ENCODE measurements at regions of chr1 and their contacts with region 1.

Region 1: GRCh38 chr1:206635080-206635977 is at the start of gene DYRK3:
- DNase-seq: peak; percentile 97
- ATAC-seq: peak; percentile 85
- H3K4me3 Mint-ChIP-seq: peak within 1 kb of the TSS; percentile 76
- H3K27ac Mint-ChIP-seq: peak within 1 kb of the TSS; percentile 74
- H3K4me1 Mint-ChIP-seq: peaks cover 34% of the 10 kb centered on the region
- H3K27me3 Mint-ChIP-seq: no peaks in the 10 kb centered on the region; the same call in 1 of the 2 replicates
- CTCF ChIP-seq: no peak
- total RNA-seq, gene DYRK3: 6.7 to 7.8 TPM (median 6.7 TPM) in 3 replicates

Region 2: DNA sequence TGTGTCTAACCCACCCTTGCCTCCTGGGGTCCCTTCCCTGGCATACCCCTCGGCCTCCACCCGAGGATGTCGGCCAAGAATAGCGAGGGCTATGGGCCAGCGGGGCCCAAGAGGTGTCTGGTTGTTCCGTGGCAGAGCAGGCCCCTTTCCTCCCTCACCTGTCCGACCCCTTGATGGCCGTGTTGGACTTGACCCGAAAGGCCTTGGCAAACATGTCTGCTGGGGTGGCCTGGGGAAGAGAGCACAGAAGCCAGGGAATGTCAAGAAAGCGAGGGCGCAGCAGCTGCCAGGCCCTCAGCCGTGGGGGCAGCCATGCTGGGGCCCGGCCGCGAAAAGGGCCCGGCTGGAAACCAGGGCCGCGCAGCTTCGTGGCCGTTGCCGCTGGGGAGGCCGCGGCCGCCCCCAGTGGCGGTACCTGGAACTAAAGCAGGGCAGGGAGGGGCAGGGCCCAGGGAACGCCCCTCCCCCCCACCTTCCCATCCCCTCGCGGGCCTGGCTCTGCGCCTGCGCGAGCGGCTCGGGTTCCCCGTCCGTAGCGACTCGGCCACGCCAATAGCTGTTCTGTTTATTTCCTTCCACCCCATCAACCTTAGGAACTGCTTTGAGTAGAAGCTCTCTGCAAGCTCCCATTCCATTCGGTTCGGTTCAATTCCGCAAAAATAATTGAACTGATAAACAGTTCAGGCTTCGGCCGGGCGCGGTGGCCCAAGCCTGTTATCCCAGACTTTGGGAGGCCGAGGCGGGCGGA is 23.0 kb before region 1 on chr1 and contains the start of gene EIF2D:
- CTCF ChIA-PET with region 1: interaction called, 62 read pairs
- POLR2A ChIA-PET with region 1: interaction called, 9 read pairs
- DNase-seq: peak; percentile 95
- ATAC-seq: peak; percentile 98
- H3K4me3 Mint-ChIP-seq: peak within 1 kb of the TSS; percentile 94
- H3K27ac Mint-ChIP-seq: peak within 1 kb of the TSS; percentile 97
- H3K4me1 Mint-ChIP-seq: peaks cover 12% of the 10 kb centered on the region
- H3K27me3 Mint-ChIP-seq: peaks cover 7% of the 10 kb centered on the region
- CTCF ChIP-seq: peak; percentile 88
- total RNA-seq, gene EIF2D: 35.7 to 36.8 TPM (median 35.9 TPM) in 3 replicates

Region 3: DNA sequence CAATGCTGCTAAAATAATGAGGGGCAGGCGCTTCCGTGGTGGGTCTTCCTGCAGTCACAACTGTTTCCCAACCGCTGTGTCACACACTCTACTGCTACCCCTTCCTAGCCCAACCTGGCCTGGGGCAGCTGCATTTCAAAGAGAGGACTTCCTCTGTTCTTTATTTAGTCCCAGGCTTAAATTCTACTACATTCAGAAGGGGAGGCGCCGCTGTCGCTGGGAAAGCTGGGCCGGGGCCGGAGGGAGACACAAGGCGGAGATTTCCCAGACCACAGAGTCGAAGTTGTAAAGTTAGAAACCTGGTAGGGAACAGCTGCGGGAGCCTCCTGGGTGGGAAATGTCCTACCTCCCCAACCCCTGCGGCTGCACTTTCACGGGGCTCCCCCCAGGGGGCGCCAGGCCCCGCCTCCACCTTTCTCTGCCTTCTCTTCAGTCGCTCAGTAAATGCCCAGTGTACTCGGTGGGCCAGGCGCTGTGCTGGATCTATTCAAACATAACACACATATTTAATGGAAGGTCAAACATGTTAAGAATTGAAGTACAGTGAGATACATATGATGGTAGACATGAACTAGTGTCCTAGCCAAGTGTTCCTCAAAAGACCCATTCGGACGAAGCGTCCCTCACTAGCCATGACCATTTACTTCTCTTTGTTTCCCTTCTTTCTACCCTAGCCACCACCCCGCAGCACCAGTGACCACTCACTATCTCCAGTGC is 23.1 kb after region 1 on chr1:
- CTCF ChIA-PET with region 1: interaction called, 659 read pairs
- POLR2A ChIA-PET with region 1: interaction called, 15 read pairs
- DNase-seq: peak; percentile 79
- ATAC-seq: peak; percentile 91
- H3K4me3 Mint-ChIP-seq: peak overlapping the region; percentile 58
- H3K27ac Mint-ChIP-seq: no peak overlapping the region
- H3K4me1 Mint-ChIP-seq: peaks cover 20% of the 10 kb centered on the region
- H3K27me3 Mint-ChIP-seq: peaks cover 43% of the 10 kb centered on the region
- CTCF ChIP-seq: peak; percentile 97

Region 4: GRCh38 chr1:206684478-206685333 is 49.4 kb after region 1 on chr1 and contains the start of gene MAPKAPK2:
- CTCF ChIA-PET with region 1: interaction called, 14 read pairs
- POLR2A ChIA-PET with region 1: interaction called, 3 read pairs
- DNase-seq: peak; percentile 68
- ATAC-seq: peak; percentile 45
- H3K4me3 Mint-ChIP-seq: peak within 1 kb of the TSS; percentile 86
- H3K27ac Mint-ChIP-seq: peak within 1 kb of the TSS; percentile 60; the same call in 1 of the 2 replicates
- H3K4me1 Mint-ChIP-seq: peaks cover 43% of the 10 kb centered on the region
- H3K27me3 Mint-ChIP-seq: peaks cover 59% of the 10 kb centered on the region
- CTCF ChIP-seq: no peak
- total RNA-seq, gene MAPKAPK2: 46.4 to 54.9 TPM (median 48.9 TPM) in 3 replicates

Region 5: GRCh38 chr1:206725109-206725963 is 90.0 kb after region 1 on chr1:
- CTCF ChIA-PET with region 1: interaction called, 11 read pairs
- POLR2A ChIA-PET with region 1: no interaction called
- DNase-seq: peak; percentile 67
- ATAC-seq: peak; percentile 26
- H3K4me3 Mint-ChIP-seq: no peak overlapping the region
- H3K27ac Mint-ChIP-seq: no peak overlapping the region; the same call in 1 of the 2 replicates
- H3K4me1 Mint-ChIP-seq: peaks cover 26% of the 10 kb centered on the region
- H3K27me3 Mint-ChIP-seq: no peaks in the 10 kb centered on the region
- CTCF ChIP-seq: peak; percentile 46; the same call in 1 of the 2 replicates

Region 6: DNA sequence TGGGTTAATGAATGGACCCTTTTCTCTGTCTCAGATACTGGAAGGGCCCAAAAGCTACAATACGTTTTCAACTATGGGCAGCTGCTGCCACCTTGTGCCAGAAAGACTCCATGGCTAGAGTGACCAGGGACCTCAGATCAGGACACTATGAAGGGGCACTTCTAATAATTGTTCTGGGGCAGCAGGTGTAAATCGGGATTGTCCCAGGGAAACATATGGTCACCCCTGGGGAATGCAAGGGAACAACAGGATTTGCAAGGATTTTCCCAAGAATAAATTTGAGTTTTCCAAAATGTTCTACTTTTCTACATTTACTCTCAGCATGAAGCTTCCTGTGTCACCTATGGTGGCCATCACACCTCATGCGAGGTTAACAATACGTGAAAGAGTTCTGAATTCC is 346.9 kb after region 1 on chr1:
- CTCF ChIA-PET with region 1: interaction called, 10 read pairs
- POLR2A ChIA-PET with region 1: interaction called, 4 read pairs
- DNase-seq: peak; percentile 59
- ATAC-seq: peak; percentile 71
- H3K4me3 Mint-ChIP-seq: no peak overlapping the region
- H3K27ac Mint-ChIP-seq: no peak overlapping the region
- H3K4me1 Mint-ChIP-seq: peaks cover 39% of the 10 kb centered on the region
- H3K27me3 Mint-ChIP-seq: peaks cover 43% of the 10 kb centered on the region
- CTCF ChIP-seq: peak; percentile 21; the same call in 1 of the 2 replicates